ENCODE measurements at regions of chr7 and their contacts with region 1.

Region 1: GRCh38 chr7:108497082-108497725 is 28.7 kb downstream of the PNPLA8 start:
- DNase-seq: peak; percentile 1
- H3K4me3 ChIP-seq: no peak overlapping the region
- CTCF ChIP-seq: peak; percentile 68

Region 2: GRCh38 chr7:108181073-108181985 is 315.9 kb before region 1 on chr7:
- CTCF ChIA-PET with region 1: interaction called, 103 read pairs
- POLR2A ChIA-PET with region 1: no interaction called
- DNase-seq: peak; percentile 12
- H3K4me3 ChIP-seq: no peak overlapping the region
- CTCF ChIP-seq: peak; percentile 47

Region 3: GRCh38 chr7:108452722-108453121 is 44.5 kb before region 1 on chr7:
- CTCF ChIA-PET with region 1: interaction called, 42 read pairs
- POLR2A ChIA-PET with region 1: no interaction called
- DNase-seq: no peak
- H3K4me3 ChIP-seq: no peak overlapping the region
- CTCF ChIP-seq: peak; percentile 46

Region 4: DNA sequence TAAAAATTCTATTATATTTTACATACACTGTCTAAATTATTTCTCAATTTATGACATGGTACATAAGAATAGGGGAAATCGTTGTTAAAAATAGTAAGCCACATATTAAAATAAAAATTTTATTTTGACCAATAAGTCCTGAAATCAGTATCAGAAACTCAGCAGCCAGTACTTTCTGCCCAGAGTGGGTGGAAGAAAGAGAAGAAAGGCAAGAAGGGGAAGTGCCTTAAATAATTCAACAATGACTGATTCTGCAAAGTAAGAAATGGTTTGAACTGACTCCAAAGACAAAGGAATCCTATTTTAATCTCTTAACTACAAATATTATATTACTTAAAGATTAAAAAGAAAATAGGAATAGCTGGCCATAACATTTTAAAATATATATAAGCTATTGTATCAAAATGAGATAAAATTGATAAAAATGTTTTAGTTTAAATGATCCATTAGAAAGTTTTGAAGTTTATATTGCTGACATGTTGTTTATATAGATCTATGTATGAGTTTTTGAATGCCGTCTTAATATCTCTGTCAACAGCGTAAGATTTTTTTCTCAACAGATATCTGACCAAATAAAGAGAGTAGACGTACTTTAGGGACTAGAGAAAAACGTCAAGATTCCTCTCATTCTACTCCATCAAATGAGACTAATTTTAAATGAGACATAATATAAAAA is 10.8 kb before region 1 on chr7:
- CTCF ChIA-PET with region 1: interaction called, 66 read pairs
- POLR2A ChIA-PET with region 1: no interaction called
- DNase-seq: peak; percentile 26
- H3K4me3 ChIP-seq: no peak overlapping the region
- CTCF ChIP-seq: no peak

Region 5: GRCh38 chr7:108525985-108526767 is 29.0 kb after region 1 on chr7 and contains the start of gene PNPLA8:
- CTCF ChIA-PET with region 1: interaction called, 14 read pairs
- POLR2A ChIA-PET with region 1: no interaction called
- DNase-seq: peak; percentile 97
- H3K4me3 ChIP-seq: peak within 1 kb of the TSS; percentile 88
- CTCF ChIP-seq: no peak

Region 6: DNA sequence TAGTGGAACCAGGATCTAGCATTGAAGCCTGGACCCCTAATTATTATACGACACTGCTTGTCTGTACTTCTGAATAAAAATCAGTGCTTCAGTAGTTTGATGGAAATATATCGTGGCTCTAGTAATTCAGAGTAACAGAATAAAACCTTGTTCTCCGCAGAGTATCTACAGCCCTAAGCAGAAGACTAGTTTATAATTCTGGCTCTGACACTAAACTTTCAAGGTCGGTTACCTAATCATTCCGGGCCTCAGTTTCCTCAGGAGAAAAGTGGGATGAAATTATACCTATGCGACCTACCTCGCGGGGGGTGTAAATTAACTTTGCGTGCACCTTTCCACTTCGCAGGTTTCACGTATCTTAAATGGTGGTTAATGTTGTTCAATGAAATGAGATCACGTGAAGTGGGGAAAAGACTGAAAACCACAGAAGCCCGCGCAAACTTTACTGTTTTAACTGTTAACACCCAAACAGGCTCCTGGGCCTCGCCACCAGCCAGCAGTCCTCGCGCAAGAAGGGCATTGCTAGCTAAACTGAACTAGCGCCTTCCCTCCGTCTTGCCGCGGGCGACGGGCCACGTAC is 71.7 kb after region 1 on chr7:
- CTCF ChIA-PET with region 1: no interaction called
- POLR2A ChIA-PET with region 1: no interaction called
- DNase-seq: no peak
- H3K4me3 ChIP-seq: peak overlapping the region; percentile 89
- CTCF ChIP-seq: no peak